A549 (cell line): ENCODE measurements at regions of chr20 and their contacts with region 1.

Region 1: DNA sequence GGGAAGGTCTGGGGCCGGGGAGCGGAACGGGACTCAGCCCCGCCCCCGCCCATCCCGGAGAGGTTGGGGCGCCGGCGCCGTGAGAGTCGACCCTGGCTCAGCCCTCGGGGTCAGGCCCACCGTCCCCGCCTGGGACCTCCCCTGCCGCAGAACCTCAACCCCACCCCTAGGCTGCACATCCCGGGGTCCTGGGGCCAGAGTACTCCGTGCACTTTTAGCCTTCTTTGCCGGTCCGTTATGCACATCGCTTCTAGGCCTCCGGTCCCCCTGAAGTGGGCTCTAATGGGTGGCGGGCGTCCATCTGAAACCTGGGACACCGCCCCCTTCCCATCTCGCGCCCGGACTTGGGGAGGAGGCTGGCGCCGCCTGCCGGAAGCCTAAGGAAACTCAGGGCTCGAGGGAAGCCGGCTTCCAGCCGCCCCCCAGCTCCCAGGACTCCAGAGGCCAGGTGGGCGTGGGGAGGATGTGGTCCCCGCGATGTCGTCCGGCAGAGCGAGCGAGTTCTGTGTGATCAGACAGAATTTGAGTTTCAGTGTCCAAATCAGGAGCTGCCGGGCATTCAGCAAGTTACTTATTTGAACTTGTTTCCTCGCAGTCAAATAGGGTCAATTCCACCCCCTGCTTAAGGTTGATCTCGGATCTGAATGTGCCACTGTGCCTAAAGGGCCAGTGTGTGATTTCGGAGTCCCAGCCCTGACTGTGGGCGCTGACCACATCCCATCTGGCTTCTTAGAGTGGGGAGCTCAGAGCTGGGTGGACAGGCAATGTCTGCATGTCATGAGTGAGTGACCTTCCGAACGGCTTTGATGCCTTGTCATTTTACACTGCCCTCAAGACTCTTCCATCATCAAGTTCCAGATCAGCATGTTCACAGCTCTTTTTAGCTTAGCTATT is 47.6 kb downstream of the CPXM1 start:
- DNase-seq: peak; percentile 75 to 81
- ATAC-seq: peak in 1 of 2 experiments; percentile 61; a peak in 3 of 6 replicates
- H3K4me3 ChIP-seq: peak overlapping the region; percentile 68
- H3K27ac ChIP-seq: peak overlapping the region; percentile 73 to 83; a peak in 5 of 6 replicates
- H3K4me1 ChIP-seq: peaks cover 40% of the 10 kb centered on the region
- CTCF ChIP-seq: peak; percentile 84
- EP300 ChIP-seq: no peak
- POLR2A ChIP-seq: no peak
- RAD21 ChIP-seq: peak; percentile 67 to 68

Region 2: DNA sequence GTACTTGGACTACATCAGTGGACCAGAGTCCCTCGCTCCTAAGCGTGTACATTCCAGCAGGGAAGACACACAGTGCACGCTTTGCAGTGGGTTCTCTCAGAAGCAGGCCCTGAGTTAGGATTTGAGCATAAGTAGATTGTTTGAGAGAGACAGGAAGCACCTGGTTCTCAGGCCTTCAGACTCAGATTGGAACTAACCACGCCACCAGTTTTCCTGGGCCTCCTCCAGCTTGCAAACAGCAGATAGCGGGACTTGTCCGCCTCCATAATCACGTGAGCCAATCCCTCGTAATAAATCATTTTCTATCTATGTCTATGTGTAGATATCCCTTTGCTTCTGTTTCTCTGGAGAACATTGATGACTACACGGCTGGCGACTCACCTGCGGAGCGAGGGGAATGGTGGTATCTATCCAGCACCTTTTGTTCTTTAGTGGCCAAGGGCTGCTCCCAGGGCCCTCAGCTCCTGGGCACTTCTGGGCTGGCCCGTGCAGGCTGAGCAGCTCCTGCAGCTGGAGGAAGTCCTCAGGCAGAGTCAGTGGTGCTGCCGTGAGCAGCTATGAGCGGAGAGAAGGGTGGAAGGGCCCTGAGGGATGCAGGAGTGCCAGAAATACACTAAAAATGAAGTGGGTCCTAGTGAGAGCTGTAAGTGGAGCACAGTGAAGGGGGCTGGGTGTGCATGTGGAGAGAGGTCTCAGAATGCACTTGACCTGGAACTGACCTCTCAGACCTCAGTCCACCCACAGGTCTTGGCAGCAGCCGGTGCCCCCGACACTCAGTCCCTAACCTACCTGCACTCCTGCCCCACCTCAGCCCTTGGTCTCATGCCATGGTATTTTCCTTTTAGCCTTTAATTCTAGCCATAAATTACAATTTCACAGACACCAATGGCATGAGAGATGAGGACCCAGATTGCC is 574.2 kb before region 1 on chr20:
- CTCF ChIA-PET with region 1: no interaction called
- POLR2A ChIA-PET with region 1: no interaction called
- DNase-seq: no peak
- ATAC-seq: no peak
- H3K4me3 ChIP-seq: no peak overlapping the region
- H3K27ac ChIP-seq: no peak overlapping the region
- H3K4me1 ChIP-seq: no peaks in the 10 kb centered on the region
- CTCF ChIP-seq: no peak
- EP300 ChIP-seq: no peak
- POLR2A ChIP-seq: no peak
- RAD21 ChIP-seq: no peak

Region 3: GRCh38 chr20:2688041-2688591 is 64.7 kb before region 1 on chr20:
- CTCF ChIA-PET with region 1: interaction called, 22 read pairs
- POLR2A ChIA-PET with region 1: no interaction called
- DNase-seq: peak in 1 of 2 experiments; percentile 59
- ATAC-seq: peak in 1 of 2 experiments; percentile 65; a peak in 3 of 6 replicates
- H3K4me3 ChIP-seq: no peak overlapping the region
- H3K27ac ChIP-seq: no peak overlapping the region
- H3K4me1 ChIP-seq: 0 out of 3 replicates have a peak, but pooled peaks cover 3% of the 10 kb centered on the region
- CTCF ChIP-seq: peak; percentile 51
- EP300 ChIP-seq: no peak
- POLR2A ChIP-seq: no peak
- RAD21 ChIP-seq: peak; percentile 61 to 71

Region 4: DNA sequence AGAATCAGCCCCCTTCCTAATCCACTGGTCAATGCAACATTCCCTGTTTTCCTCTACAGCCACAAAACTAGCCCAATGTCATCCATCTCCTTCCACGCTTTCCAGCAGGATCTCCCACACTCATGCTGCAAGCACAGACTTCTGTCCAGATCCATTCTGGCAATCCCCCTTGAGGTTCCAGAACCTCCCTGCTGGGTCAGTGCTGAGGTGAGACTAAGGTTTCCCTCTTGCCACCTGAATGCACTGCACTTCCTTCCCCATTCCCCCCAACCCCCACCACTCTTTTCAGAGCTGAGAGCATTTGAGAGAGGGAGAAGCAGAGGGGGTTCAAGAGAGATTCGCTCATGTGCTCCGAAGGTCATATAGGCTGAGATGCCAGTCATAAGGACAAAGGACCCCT is 16.4 kb before region 1 on chr20:
- CTCF ChIA-PET with region 1: interaction called, 31 read pairs
- POLR2A ChIA-PET with region 1: no interaction called
- DNase-seq: no peak
- ATAC-seq: no peak
- H3K4me3 ChIP-seq: no peak overlapping the region
- H3K27ac ChIP-seq: no peak overlapping the region
- H3K4me1 ChIP-seq: no peaks in the 10 kb centered on the region
- CTCF ChIP-seq: no peak
- EP300 ChIP-seq: no peak
- POLR2A ChIP-seq: no peak
- RAD21 ChIP-seq: no peak

Region 5: GRCh38 chr20:2775139-2775538 is 22.3 kb after region 1 on chr20:
- CTCF ChIA-PET with region 1: interaction called, 103 read pairs
- POLR2A ChIA-PET with region 1: no interaction called
- DNase-seq: no peak
- ATAC-seq: no peak
- H3K4me3 ChIP-seq: no peak overlapping the region
- H3K27ac ChIP-seq: no peak overlapping the region
- H3K4me1 ChIP-seq: no peaks in the 10 kb centered on the region
- CTCF ChIP-seq: no peak
- EP300 ChIP-seq: no peak
- POLR2A ChIP-seq: no peak
- RAD21 ChIP-seq: no peak

Region 6: DNA sequence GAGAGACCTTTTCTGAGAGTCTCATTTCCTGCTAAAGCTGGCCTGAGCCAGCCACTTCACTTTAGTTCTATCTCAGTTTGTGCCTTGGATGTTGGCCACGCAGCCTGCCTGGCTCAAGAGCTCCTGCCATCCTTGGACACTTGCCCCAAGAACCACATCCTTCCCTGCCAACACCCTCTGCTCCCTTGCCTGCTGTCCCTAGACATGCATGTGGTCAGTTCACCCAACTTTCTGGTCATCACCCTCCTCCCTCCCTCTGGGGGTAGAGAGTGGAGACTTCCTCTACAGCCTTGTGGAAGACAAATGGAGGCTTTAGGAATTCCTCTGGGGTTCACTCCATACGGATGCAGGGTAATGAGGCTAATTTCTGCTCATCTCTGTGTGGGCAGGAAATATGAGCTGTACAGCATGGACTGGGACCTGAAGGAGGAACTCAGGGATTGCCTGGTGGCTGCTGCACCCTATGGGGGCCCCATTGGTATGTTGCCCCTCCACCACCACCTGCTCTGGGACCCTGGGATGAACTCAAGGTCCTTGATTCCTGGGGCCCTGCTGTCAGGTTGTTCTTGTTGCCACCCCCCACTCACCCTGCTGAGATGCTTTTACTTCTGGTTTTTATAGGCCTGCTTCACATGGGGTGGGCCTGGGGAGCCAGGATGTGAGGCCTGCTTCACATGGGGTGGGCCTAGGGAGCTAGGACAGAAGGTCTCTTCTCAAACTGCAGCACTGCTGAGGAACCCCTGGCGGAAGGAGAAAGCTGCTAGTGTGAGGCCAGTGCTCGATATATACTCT is 106.7 kb after region 1 on chr20:
- CTCF ChIA-PET with region 1: interaction called, 170 read pairs
- POLR2A ChIA-PET with region 1: no interaction called
- DNase-seq: no peak
- ATAC-seq: no peak
- H3K4me3 ChIP-seq: no peak overlapping the region
- H3K27ac ChIP-seq: no peak overlapping the region
- H3K4me1 ChIP-seq: no peaks in the 10 kb centered on the region
- CTCF ChIP-seq: no peak
- EP300 ChIP-seq: no peak
- POLR2A ChIP-seq: no peak
- RAD21 ChIP-seq: no peak

Region 7: DNA sequence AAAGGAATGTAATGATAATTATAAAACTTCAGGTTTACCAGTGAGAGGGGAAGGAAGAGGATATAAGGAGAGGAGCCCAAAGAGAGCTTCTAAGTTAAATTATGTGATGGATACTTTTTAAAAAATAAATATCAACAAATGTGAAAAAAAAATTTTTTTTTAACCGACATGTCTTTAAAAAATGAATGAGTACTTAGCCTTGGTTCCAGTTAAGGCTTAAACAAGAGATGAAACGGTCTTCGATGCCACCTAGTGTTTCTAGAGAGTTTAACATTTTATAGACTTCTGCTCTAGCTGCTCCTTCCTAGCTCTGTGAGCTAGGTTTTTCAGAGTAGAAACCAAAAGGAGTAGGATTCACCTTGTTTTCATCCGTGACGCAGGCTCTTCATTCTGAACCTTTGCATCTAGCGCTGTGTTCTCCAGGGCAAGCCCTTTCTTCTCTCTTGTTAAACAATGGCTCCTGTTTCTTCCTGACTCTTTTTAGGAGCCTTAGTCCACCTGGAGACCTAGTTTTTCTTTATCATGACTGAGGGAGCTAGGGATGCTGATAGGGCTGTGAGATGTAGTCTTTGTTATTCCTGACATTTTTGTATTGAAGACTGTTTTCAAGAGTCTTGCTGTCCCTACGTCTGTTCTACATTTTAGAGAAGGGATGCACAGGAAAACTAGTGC is 248.2 kb after region 1 on chr20:
- CTCF ChIA-PET with region 1: interaction called, 28 read pairs
- POLR2A ChIA-PET with region 1: interaction called, 3 read pairs
- DNase-seq: peak; percentile 60 to 80
- ATAC-seq: peak; percentile 98 to 99
- H3K4me3 ChIP-seq: no peak overlapping the region
- H3K27ac ChIP-seq: no peak overlapping the region
- H3K4me1 ChIP-seq: no peaks in the 10 kb centered on the region
- CTCF ChIP-seq: peak; percentile 92
- EP300 ChIP-seq: no peak
- POLR2A ChIP-seq: no peak
- RAD21 ChIP-seq: peak; percentile 86 to 89